Naive thymus-derived CD4-positive, alpha-beta T cell (primary cell): ENCODE measurements at regions of chr6 and their contacts with region 1.

Region 1: GRCh38 chr6:31739639-31740396 is at the start of gene MSH5:
- DNase-seq: peak; percentile 82 to 97 (median 92)
- ATAC-seq: peak; percentile 93
- H3K4me3 ChIP-seq: peak within 1 kb of the TSS; percentile 68
- H3K4me3 Mint-ChIP-seq: peak within 1 kb of the TSS; percentile 86 to 100 (median 98)
- H3K27ac ChIP-seq: peak within 1 kb of the TSS; percentile 69
- H3K27ac Mint-ChIP-seq: peak within 1 kb of the TSS; percentile 83 to 94 (median 90)
- H3K4me1 ChIP-seq: peaks cover 32 to 33% of the 10 kb centered on the region in 2 donors
- H3K4me1 Mint-ChIP-seq: peaks cover 41 to 69% (median 61%) of the 10 kb centered on the region in 7 donors
- H3K27me3 ChIP-seq: no peaks in the 10 kb centered on the region
- H3K27me3 Mint-ChIP-seq: no peaks in the 10 kb centered on the region
- total RNA-seq, gene MSH5: 10.3 to 52.2 (median 11.4) TPM

Region 2: DNA sequence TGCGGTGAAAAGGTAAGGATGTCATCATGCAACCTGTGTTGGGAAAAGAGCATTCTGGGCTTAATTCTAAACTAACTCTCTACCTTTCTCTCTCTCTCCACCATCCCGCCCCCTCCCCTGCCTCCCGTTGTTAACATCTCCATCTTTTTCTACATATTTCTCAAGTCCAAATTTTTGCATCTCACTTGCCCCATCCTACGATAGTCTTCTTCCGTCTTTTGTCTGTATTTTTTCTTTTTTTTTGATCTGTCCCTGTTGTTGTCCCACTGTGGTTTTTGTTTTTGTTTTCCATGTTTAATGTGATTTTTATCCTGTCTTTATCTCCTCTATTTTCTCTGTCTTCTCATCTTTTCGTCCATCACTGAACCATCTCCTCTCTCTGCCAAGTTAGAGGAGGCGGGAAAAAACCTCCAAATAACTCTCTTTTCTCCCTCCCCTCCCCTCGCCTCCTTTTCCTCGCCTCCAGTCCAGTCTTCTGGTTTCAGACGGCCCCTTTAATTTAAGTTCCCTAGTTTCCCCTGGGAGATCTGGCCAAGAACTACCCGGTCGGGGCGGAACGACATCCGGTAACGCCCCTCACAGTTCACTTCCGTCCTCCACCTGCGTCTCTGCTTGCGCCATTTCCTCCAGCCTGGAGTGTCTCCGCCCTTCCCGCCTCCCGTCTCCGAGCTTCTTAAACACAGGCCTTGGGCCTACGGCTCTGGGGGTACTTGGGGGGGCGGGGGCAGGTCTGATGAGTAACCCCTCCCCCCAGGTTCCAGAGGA is 192.7 kb before region 1 on chr6 and contains the start of gene NFKBIL1:
- CTCF ChIA-PET with region 1: interaction called, 3 read pairs
- POLR2A ChIA-PET with region 1: interaction called, 3 read pairs
- intact Hi-C with region 1: loop called in 1 of 2 experiments (anchors 2 kb)
- DNase-seq: peak; percentile 53 to 90 (median 84)
- ATAC-seq: peak; percentile 91
- H3K4me3 ChIP-seq: peak within 1 kb of the TSS; percentile 68
- H3K4me3 Mint-ChIP-seq: peak within 1 kb of the TSS; percentile 81 to 97 (median 91)
- H3K27ac ChIP-seq: peak within 1 kb of the TSS; percentile 89
- H3K27ac Mint-ChIP-seq: peak within 1 kb of the TSS; percentile 78 to 98 (median 95)
- H3K4me1 ChIP-seq: peaks cover 22 to 31% of the 10 kb centered on the region in 2 donors
- H3K4me1 Mint-ChIP-seq: peaks cover 22 to 57% (median 48%) of the 10 kb centered on the region in 7 donors
- H3K27me3 ChIP-seq: no peaks in the 10 kb centered on the region
- H3K27me3 Mint-ChIP-seq: no peaks in the 10 kb centered on the region
- total RNA-seq, gene NFKBIL1: 8.7 to 17.2 (median 11.6) TPM

Region 3: DNA sequence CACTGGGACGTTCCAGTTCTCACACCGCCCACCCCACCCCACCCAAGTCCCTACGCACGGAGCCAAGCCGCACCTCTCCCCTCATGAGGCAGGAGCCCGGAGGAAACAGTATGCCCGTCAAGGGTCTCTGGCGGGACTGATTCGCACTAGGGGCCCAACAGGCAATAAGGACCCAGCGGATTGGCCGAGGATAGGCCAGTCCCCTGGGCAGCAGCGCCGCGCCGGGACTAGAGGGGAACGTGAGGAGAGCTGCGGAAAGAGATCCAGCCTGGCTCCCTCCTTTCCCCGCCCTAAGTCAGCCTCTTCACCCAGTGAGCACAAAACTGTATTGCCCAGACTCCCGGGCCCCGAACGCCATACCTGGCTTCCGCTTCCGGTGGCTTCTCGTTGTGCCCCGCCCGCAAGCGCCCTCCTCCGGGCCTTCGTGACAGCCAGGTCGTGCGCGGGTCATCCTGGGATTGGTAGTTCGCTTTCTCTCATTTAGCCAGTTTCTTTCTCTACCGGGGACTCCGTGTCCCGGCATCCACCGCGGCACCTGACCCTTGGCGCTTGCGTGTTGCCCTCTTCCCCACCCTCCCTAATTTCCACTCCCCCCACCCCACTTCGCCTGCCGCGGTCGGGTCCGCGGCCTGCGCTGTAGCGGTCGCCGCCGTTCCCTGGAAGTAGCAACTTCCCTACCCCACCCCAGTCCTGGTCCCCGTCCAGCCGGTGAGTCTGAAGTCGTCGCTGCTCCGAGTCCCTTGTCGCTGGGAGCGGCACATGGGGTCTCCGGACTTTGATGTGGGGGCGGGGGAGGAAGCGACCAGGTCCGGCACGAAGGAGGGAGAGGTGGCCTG is 74.1 kb before region 1 on chr6 and contains the start of gene CSNK2B:
- CTCF ChIA-PET with region 1: no interaction called
- POLR2A ChIA-PET with region 1: no interaction called
- intact Hi-C with region 1: loop called in 1 of 2 experiments (anchors 2 kb)
- DNase-seq: peak; percentile 87 to 99 (median 98)
- ATAC-seq: peak; percentile 94
- H3K4me3 ChIP-seq: peak within 1 kb of the TSS; percentile 91
- H3K4me3 Mint-ChIP-seq: peak within 1 kb of the TSS; percentile 93 to 99 (median 96)
- H3K27ac ChIP-seq: peak within 1 kb of the TSS; percentile 97
- H3K27ac Mint-ChIP-seq: peak within 1 kb of the TSS; percentile 94 to 99 (median 98)
- H3K4me1 ChIP-seq: peaks cover 33 to 43% of the 10 kb centered on the region in 2 donors
- H3K4me1 Mint-ChIP-seq: peaks cover 25 to 75% (median 64%) of the 10 kb centered on the region in 7 donors
- H3K27me3 ChIP-seq: no peaks in the 10 kb centered on the region
- H3K27me3 Mint-ChIP-seq: peaks cover 0 to 2% (median 0%) of the 10 kb centered on the region in 5 donors
- total RNA-seq, gene CSNK2B: 101 to 215 (median 133) TPM

Region 4: GRCh38 chr6:31769684-31770371 is 30.0 kb after region 1 on chr6:
- CTCF ChIA-PET with region 1: interaction called, 7 read pairs
- POLR2A ChIA-PET with region 1: interaction called, 6 read pairs
- intact Hi-C with region 1: loop called (anchors 1 kb)
- DNase-seq: peak; percentile 56 to 85 (median 71)
- ATAC-seq: peak; percentile 89
- H3K4me3 ChIP-seq: no peak overlapping the region
- H3K4me3 Mint-ChIP-seq: peak overlapping the region in 3 of 10 donors; percentile 2 to 45 (median 7)
- H3K27ac ChIP-seq: no peak overlapping the region
- H3K27ac Mint-ChIP-seq: peak overlapping the region in 4 of 9 donors; percentile 6 to 68 (median 38)
- H3K4me1 ChIP-seq: peaks cover 23 to 27% of the 10 kb centered on the region in 2 donors
- H3K4me1 Mint-ChIP-seq: peaks cover 4 to 38% (median 34%) of the 10 kb centered on the region in 7 donors
- H3K27me3 ChIP-seq: no peaks in the 10 kb centered on the region
- H3K27me3 Mint-ChIP-seq: no peaks in the 10 kb centered on the region

Region 5: GRCh38 chr6:31815025-31815838 is 75.4 kb after region 1 on chr6 and contains the starts of genes HSPA1A and HSPA1L:
- CTCF ChIA-PET with region 1: interaction called, 6 read pairs
- POLR2A ChIA-PET with region 1: interaction called, 5 read pairs
- intact Hi-C with region 1: loop called in 1 of 2 experiments (anchors 2 kb)
- DNase-seq: peak in 6 of 9 donors; percentile 32 to 81 (median 42)
- ATAC-seq: peak; percentile 43
- H3K4me3 ChIP-seq: peak within 1 kb of the TSS; percentile 68
- H3K4me3 Mint-ChIP-seq: peak within 1 kb of the TSS; percentile 85 to 96 (median 94)
- H3K27ac ChIP-seq: peak within 1 kb of the TSS; percentile 78
- H3K27ac Mint-ChIP-seq: peak within 1 kb of the TSS; percentile 86 to 93 (median 90)
- H3K4me1 ChIP-seq: peaks cover 21 to 30% of the 10 kb centered on the region in 2 donors
- H3K4me1 Mint-ChIP-seq: peaks cover 7 to 44% (median 39%) of the 10 kb centered on the region in 7 donors
- H3K27me3 ChIP-seq: no peaks in the 10 kb centered on the region
- H3K27me3 Mint-ChIP-seq: no peaks in the 10 kb centered on the region
- total RNA-seq, gene HSPA1A: 6.7 to 125 (median 30.3) TPM
- total RNA-seq, gene HSPA1L: 3.3 to 5.5 (median 4.7) TPM

Region 6: GRCh38 chr6:31971993-31972708 is 232.3 kb after region 1 on chr6 and contains the start of gene DXO:
- CTCF ChIA-PET with region 1: no interaction called
- POLR2A ChIA-PET with region 1: interaction called, 3 read pairs
- intact Hi-C with region 1: loop called in 1 of 2 experiments (anchors 10 kb)
- DNase-seq: peak; percentile 95 to 100 (median 99)
- ATAC-seq: peak; percentile 94
- H3K4me3 ChIP-seq: peak within 1 kb of the TSS; percentile 90
- H3K4me3 Mint-ChIP-seq: peak within 1 kb of the TSS; percentile 86 to 99 (median 99)
- H3K27ac ChIP-seq: peak within 1 kb of the TSS; percentile 97
- H3K27ac Mint-ChIP-seq: peak within 1 kb of the TSS; percentile 97 to 100 (median 100)
- H3K4me1 ChIP-seq: peaks cover 21 to 22% of the 10 kb centered on the region in 2 donors
- H3K4me1 Mint-ChIP-seq: peaks cover 20 to 51% (median 42%) of the 10 kb centered on the region in 7 donors
- H3K27me3 ChIP-seq: no peaks in the 10 kb centered on the region
- H3K27me3 Mint-ChIP-seq: peaks cover 0 to 5% (median 0%) of the 10 kb centered on the region in 5 donors
- total RNA-seq, gene DXO: 19.3 to 44.3 (median 35.0) TPM